Caco-2 (cell line): ENCODE measurements at regions of chr7 and their contacts with region 1.

Region 1: DNA sequence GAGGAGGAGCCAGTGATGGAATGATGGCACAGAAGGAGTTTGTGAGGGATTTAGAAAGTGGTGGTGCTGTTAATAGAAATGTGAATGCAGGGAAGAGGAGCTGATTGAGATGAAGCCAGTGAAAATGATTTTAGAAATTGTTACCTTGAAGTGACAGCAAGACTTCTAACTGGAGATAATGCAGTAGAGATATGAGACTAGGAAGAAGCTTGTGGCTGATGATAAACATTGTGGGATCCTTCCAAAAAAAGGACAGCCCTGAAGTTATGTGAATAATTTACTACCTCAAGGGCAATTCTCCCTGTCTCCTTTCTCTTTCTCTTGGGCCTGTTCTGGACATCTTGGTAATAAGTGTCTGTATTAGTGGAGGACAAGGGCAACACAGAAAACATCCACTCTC is 138.6 kb downstream of the LSMEM1 start:
- DNase-seq: no peak
- H3K4me3 ChIP-seq: no peak overlapping the region
- H3K4me3 Mint-ChIP-seq: no peak overlapping the region
- H3K27ac Mint-ChIP-seq: no peak overlapping the region
- H3K4me1 ChIP-seq: no peaks in the 10 kb centered on the region
- H3K4me1 Mint-ChIP-seq: no peaks in the 10 kb centered on the region
- H3K27me3 ChIP-seq: no peaks in the 10 kb centered on the region
- H3K27me3 Mint-ChIP-seq: peaks cover 2% of the 10 kb centered on the region
- CTCF ChIP-seq: no peak

Region 2: GRCh38 chr7:113875224-113875623 is 1255.9 kb after region 1 on chr7:
- CTCF ChIA-PET with region 1: no interaction called
- POLR2A ChIA-PET with region 1: no interaction called
- intact Hi-C with region 1: loop called (anchors 5 kb)
- DNase-seq: no peak
- H3K4me3 ChIP-seq: no peak overlapping the region
- H3K4me3 Mint-ChIP-seq: no peak overlapping the region
- H3K27ac Mint-ChIP-seq: no peak overlapping the region
- H3K4me1 ChIP-seq: no peaks in the 10 kb centered on the region
- H3K4me1 Mint-ChIP-seq: no peaks in the 10 kb centered on the region
- H3K27me3 ChIP-seq: no peaks in the 10 kb centered on the region
- H3K27me3 Mint-ChIP-seq: peaks cover 3% of the 10 kb centered on the region
- CTCF ChIP-seq: no peak